ENCODE measurements at regions of chr1 and their contacts with region 1.

Region 1: GRCh38 chr1:156689035-156689952 is 12.1 kb upstream of the NES start:
- DNase-seq: peak; percentile 41 to 95 (median 74)

Region 2: DNA sequence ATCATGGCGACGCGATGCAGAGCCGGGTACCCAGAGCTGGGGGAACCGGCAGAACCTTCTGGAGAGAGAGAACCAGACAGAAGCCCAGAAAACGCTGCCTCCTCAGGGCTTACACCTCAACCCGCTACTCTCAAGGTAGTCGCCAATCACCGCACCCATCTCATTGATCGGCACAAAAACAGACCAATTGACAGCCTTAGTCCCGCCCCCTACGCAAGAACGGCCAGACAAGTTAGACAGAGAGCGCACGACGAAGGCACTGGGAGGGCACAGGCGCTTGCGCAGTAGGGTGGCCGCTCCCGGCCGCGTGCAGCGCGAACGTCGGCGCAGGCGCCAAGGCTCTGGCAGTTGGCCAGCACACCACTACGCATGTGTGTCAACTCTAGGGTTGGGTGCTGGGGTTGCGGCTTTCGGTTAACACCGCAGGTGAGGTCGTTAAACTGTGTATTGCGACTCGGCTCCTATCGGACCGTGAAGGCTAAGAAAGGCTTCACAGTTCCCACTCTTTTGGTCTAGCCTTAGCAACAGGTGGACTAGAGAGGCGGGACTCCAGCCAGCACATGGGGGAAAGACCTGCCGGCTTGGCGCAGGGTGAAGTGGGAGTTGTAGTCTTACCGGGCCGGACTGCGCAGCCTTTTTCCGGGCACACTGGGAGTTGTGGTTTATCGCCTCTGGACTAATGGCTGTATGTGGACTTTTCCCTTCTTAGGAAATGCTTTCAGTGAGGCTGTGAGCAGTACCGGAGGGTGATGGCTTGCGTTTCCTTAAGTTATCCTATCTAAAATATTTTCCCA is 350.9 kb before region 1 on chr1 and contains the starts of genes CCT3 and TSACC:
- intact Hi-C with region 1: no loop called
- DNase-seq: peak; percentile 93 to 100 (median 98)

Region 3: GRCh38 chr1:156725683-156726280 is 36.5 kb after region 1 on chr1:
- intact Hi-C with region 1: loop called (anchors 1 kb)
- DNase-seq: peak; percentile 70 to 98 (median 88)